ENCODE measurements at regions of chr1 and their contacts with region 1.

Region 1: GRCh38 chr1:210373885-210374599 is 45.3 kb downstream of the HHAT start:
- DNase-seq: peak; percentile 100
- H3K4me3 Mint-ChIP-seq: peak overlapping the region; percentile 57
- H3K27ac Mint-ChIP-seq: peak overlapping the region; percentile 100
- H3K4me1 Mint-ChIP-seq: peaks cover 47% of the 10 kb centered on the region
- H3K27me3 Mint-ChIP-seq: no peaks in the 10 kb centered on the region
- CTCF ChIP-seq: peak; percentile 100

Region 2: DNA sequence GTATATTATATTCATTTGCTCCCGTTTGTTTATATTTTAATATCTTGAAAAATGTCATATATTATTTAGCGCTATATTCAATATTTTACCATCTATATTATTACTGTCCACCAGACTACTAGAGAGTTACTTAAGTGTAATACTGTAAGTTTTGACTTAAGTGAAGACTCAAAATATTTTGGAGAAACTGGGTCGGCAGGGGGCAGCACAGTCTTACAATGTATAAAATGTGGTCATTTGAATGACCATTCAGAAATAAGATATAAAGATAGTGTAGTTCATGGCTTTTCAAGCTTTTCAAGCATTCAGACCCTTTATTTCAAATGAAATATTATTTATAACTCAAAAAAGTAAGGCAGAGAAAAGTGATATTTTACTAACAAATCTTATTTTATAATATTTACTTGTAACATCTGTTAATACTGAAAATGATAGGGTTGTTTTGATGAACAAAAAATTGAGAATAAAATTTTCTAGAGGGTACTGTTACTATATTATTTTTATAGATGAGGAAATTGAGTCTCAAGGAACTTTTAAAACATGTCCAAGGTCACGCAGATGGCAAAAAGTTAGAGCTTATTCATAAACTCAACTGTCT is 230.5 kb before region 1 on chr1:
- CTCF ChIA-PET with region 1: interaction called, 9 read pairs
- POLR2A ChIA-PET with region 1: interaction called, 6 read pairs
- intact Hi-C with region 1: loop called (anchors 1 kb)
- DNase-seq: peak; percentile 89
- H3K4me3 Mint-ChIP-seq: no peak overlapping the region
- H3K27ac Mint-ChIP-seq: no peak overlapping the region
- H3K4me1 Mint-ChIP-seq: no peaks in the 10 kb centered on the region
- H3K27me3 Mint-ChIP-seq: peaks cover 32% of the 10 kb centered on the region
- CTCF ChIP-seq: peak; percentile 91

Region 3: DNA sequence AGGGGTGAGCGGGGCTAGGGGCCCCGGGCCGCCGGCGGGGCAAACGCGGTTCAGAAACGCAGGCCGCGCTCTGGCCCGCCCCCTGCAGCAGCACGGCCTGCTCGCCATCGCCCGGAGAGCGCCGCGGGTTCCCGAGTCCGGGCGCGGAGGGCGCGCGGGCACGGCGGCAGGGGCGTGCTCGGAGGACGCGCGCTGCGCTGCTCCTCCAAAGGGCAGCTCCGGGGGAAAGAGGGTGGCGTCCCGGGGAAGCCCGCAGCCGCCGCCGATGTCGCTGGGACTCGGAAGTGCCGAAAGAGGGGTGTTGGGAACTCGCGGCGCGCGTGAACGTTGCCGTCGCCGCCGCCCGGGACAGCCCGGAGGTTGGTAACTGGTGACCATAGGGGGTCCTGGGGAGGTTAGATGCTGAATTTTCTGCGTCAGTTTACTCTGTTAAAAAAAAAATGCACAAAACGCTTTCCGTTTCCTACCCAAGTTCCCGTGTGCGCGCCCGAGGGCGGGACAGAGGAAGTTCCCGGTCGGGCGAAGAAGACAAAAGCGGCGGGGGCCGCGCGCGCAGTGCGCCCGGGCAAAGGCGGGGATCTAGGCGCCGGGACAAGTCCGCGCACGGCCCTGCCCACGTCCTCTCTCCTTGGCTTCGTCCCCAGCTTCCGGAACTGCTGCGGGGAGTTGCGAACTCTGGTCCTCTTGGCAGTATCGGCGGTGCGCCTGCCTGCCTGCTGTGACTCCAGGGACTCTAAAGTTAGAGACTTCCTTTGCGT is 45.1 kb before region 1 on chr1 and contains the start of gene HHAT:
- CTCF ChIA-PET with region 1: interaction called, 25 read pairs
- POLR2A ChIA-PET with region 1: interaction called, 42 read pairs
- intact Hi-C with region 1: loop called (anchors 1 kb)
- DNase-seq: peak; percentile 95
- H3K4me3 Mint-ChIP-seq: peak within 1 kb of the TSS; percentile 81
- H3K27ac Mint-ChIP-seq: peak within 1 kb of the TSS; percentile 87
- H3K4me1 Mint-ChIP-seq: peaks cover 26% of the 10 kb centered on the region
- H3K27me3 Mint-ChIP-seq: no peaks in the 10 kb centered on the region
- CTCF ChIP-seq: no peak
- total RNA-seq, gene HHAT: 4.6 and 4.9 TPM in 2 replicates

Region 4: DNA sequence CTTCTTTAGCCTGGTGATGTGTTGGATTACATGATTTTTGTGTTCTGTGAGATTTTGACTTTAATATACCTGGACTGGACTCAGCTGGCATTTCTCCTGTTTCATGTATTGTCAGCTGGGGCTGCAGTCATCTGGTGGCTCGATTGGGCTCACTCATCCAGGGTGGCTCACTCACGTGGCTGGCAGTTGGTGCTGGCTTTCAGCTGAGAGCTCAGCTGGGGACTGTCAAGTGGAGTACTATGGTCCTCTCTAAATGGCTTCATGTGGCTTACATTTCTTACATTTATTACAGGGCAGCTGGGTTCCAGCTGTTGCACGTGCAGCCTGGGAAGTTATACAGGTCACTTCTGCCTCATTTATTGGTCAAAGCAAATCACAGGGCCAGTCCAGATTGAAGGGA is 22.5 kb before region 1 on chr1:
- CTCF ChIA-PET with region 1: interaction called, 53 read pairs
- POLR2A ChIA-PET with region 1: interaction called, 12 read pairs
- intact Hi-C with region 1: no loop called
- DNase-seq: no peak
- H3K4me3 Mint-ChIP-seq: no peak overlapping the region
- H3K27ac Mint-ChIP-seq: no peak overlapping the region
- H3K4me1 Mint-ChIP-seq: no peaks in the 10 kb centered on the region
- H3K27me3 Mint-ChIP-seq: no peaks in the 10 kb centered on the region
- CTCF ChIP-seq: no peak

Region 5: GRCh38 chr1:210384630-210385029 is 10.6 kb after region 1 on chr1:
- CTCF ChIA-PET with region 1: interaction called, 812 read pairs
- POLR2A ChIA-PET with region 1: interaction called, 27 read pairs
- intact Hi-C with region 1: no loop called
- DNase-seq: no peak
- H3K4me3 Mint-ChIP-seq: no peak overlapping the region
- H3K27ac Mint-ChIP-seq: no peak overlapping the region
- H3K4me1 Mint-ChIP-seq: no peaks in the 10 kb centered on the region
- H3K27me3 Mint-ChIP-seq: no peaks in the 10 kb centered on the region
- CTCF ChIP-seq: no peak

Region 6: DNA sequence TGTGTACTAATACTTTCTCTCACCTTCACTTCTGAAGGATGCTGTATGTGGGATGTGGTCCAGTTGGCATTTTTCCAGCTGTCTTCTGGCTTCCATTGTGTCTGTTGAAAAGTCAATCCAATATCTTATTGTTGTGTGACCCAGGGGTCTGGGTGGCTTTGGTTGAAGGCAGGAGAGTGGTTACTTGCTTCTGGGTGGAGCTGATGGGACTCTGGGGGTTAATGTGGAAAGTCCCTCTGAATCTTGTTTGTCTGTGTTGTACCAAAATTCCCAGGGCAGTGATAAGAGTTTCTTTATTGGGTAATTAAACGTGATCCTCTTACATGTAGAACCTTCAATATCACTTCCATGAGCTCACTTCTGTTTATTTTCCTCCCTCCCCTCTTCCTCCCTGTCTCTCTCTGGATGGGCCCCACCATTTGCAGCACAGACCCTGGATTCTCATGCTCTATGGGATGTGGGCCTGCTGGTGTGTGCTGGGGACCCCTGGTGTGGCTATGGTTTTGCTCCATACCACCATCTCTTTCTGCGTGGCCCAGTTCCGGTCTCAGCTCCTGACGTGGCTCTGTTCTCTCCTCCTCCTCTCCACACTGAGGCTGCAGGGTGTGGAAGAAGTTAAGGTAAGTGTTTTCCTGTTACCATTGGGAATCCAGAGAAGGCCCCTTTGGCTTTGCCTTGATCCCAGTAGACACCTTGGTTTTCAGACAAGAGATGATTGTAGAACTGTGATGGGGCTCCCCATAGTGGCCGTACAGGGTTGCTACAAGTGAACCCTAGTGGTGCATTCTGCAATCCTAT is 26.2 kb after region 1 on chr1:
- CTCF ChIA-PET with region 1: interaction called, 812 read pairs
- POLR2A ChIA-PET with region 1: interaction called, 16 read pairs
- intact Hi-C with region 1: loop called (anchors 1 kb)
- DNase-seq: peak; percentile 88
- H3K4me3 Mint-ChIP-seq: no peak overlapping the region
- H3K27ac Mint-ChIP-seq: no peak overlapping the region
- H3K4me1 Mint-ChIP-seq: peaks cover 7% of the 10 kb centered on the region
- H3K27me3 Mint-ChIP-seq: no peaks in the 10 kb centered on the region
- CTCF ChIP-seq: peak; percentile 98

Region 7: DNA sequence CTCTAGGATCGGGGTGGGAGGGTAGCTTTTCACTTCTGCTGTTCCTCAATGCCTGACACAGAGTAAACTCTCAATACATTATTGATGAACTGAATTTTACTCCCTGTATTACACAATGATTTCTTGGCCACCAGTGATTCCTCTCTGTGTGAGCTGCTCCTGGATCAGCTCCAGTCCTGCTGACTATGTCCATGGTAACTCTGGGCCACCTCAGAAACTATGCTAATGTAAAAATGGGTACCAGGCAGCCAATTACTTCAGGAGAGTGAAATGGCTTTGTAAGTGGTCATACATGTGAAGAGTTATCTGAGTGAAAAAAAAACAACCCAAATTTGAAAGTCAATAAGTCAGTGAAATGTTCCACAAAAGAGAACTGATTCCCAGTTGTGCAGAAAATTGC is 448.9 kb after region 1 on chr1:
- CTCF ChIA-PET with region 1: no interaction called
- POLR2A ChIA-PET with region 1: no interaction called
- intact Hi-C with region 1: no loop called
- DNase-seq: no peak
- H3K4me3 Mint-ChIP-seq: no peak overlapping the region
- H3K27ac Mint-ChIP-seq: no peak overlapping the region
- H3K4me1 Mint-ChIP-seq: no peaks in the 10 kb centered on the region
- H3K27me3 Mint-ChIP-seq: no peaks in the 10 kb centered on the region
- CTCF ChIP-seq: no peak

Region 8: DNA sequence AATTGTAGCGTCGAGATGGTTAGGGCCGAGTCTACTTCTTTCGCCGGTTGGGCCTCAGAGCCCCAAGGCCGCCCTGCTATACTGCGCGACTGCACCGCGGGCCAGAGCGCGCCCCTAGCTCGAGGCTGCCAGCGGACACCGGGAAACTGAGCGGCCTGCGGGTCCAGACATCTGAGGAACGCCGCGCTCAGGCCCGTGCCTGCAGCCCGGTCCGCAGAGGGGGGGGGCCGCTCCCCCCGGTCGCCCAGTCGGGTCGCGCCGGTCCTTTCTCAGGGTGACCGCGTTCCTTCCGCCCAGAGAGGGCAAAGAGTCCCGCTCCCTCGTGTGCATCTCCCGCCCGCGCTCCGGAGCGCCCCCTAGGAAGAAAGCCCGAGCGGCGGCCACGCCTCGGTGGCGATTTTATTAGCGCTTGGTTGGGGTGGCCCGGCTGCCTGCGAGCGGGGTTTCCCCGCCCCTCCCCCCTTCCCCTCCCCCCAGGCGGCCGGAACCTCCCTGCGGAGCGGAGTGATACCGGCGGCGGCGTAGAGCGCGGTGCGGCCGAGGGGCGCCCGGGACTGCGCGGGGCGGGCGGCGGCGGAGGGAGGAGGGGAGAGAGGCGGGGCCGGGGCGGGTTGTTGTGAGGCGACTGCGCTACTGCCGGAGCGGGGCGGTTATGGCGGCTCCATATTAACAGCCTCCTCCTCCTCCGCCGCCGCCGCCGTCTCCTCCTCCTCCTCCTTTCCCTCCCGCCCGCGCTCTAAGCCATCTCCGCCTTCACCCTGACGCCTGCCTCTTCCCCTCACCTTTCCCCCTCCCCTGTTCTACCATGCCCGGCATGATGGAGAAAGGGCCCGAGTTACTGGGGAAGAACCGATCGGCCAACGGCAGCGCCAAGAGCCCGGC is 885.0 kb after region 1 on chr1 and contains the start of gene RCOR3:
- CTCF ChIA-PET with region 1: interaction called, 4 read pairs
- POLR2A ChIA-PET with region 1: interaction called, 7 read pairs
- intact Hi-C with region 1: loop called (anchors 5 kb)
- DNase-seq: peak; percentile 96
- H3K4me3 Mint-ChIP-seq: peak within 1 kb of the TSS; percentile 88
- H3K27ac Mint-ChIP-seq: peak within 1 kb of the TSS; percentile 96
- H3K4me1 Mint-ChIP-seq: peaks cover 24% of the 10 kb centered on the region
- H3K27me3 Mint-ChIP-seq: no peaks in the 10 kb centered on the region
- CTCF ChIP-seq: peak; percentile 93
- total RNA-seq, gene RCOR3: 70.1 and 70.3 TPM in 2 replicates

Measured in MCF 10A (cell line).